ENCODE measurements at regions of chr14 and their contacts with region 1.

Region 1: GRCh38 chr14:105999361-106000028 is 473.1 kb downstream of the TMEM121 start:
- DNase-seq: no peak
- ATAC-seq: no peak
- H3K4me3 ChIP-seq: no peak overlapping the region
- H3K27ac ChIP-seq: no peak overlapping the region
- H3K4me1 ChIP-seq: no peaks in the 10 kb centered on the region
- H3K27me3 ChIP-seq: no peaks in the 10 kb centered on the region
- CTCF ChIP-seq: peak in 1 of 3 experiments; percentile 96; a peak in 3 of 6 replicates
- EP300 ChIP-seq: no peak
- POLR2A ChIP-seq: no peak
- RAD21 ChIP-seq: peak; percentile 62

Region 2: GRCh38 chr14:105666420-105666819 is 333.1 kb before region 1 on chr14:
- CTCF ChIA-PET with region 1: no interaction called
- POLR2A ChIA-PET with region 1: no interaction called
- RAD21 ChIA-PET with region 1: no interaction called
- SMC1A ChIA-PET with region 1: no interaction called
- in situ Hi-C with region 1: loop called (anchors 25 kb)
- intact Hi-C with region 1: no loop called
- DNase-seq: no peak
- ATAC-seq: no peak
- H3K4me3 ChIP-seq: no peak overlapping the region
- H3K27ac ChIP-seq: no peak overlapping the region
- H3K4me1 ChIP-seq: no peaks in the 10 kb centered on the region
- H3K27me3 ChIP-seq: no peaks in the 10 kb centered on the region
- CTCF ChIP-seq: no peak
- EP300 ChIP-seq: no peak
- POLR2A ChIP-seq: no peak
- RAD21 ChIP-seq: no peak

Measured in GM12878 (cell line).